ENCODE measurements at regions of chr17 and their contacts with region 1.

Region 1: DNA sequence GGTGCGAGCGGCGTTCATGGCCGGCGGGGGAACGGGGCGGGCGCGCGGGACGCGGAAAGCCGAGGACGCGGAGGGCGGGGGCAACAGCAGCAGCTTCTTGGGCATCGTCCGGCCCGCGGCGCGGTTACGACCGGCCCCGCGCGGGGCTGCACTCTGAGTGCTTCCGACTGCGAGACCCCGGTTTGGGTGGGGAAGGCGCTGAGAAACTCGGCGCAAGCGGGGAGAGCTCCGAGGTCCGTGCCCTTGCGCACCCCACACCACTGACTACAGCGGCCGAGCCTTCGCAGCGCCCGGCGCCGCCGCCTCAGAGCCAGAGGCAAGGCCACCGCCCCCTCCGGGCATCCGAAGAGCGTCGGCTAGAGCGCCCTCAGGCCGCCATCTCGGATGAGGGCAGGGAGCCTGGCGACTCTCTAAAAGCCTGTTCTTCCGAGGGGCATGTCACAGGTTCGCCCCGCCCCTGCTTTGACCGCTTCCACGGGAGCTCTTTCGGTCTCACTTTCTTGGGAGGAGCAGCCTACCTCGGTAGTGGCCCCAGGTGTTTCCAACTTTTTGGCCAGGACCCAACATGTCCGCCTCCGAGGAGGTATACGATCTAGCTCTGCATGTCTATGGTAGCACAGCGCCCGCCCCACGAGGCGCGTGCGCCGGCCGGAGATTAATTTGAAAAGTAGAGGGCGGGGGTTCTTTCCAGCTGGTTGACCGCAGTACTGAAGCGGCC is at the start of gene PRPSAP1:
- DNase-seq: no peak
- H3K4me3 ChIP-seq: peak within 1 kb of the TSS; percentile 90
- CTCF ChIP-seq: peak; percentile 64

Region 2: GRCh38 chr17:76337413-76337777 is 16.4 kb before region 1 on chr17:
- CTCF ChIA-PET with region 1: interaction called, 16 read pairs
- POLR2A ChIA-PET with region 1: no interaction called
- DNase-seq: no peak
- H3K4me3 ChIP-seq: no peak overlapping the region
- CTCF ChIP-seq: no peak

Region 3: GRCh38 chr17:76365256-76365903 is 11.6 kb after region 1 on chr17:
- CTCF ChIA-PET with region 1: interaction called, 67 read pairs
- POLR2A ChIA-PET with region 1: interaction called, 15 read pairs
- DNase-seq: no peak
- H3K4me3 ChIP-seq: no peak overlapping the region
- CTCF ChIP-seq: peak; percentile 6

Region 4: GRCh38 chr17:76370261-76370993 is 16.7 kb after region 1 on chr17:
- CTCF ChIA-PET with region 1: interaction called, 67 read pairs
- POLR2A ChIA-PET with region 1: interaction called, 15 read pairs
- DNase-seq: peak; percentile 67
- H3K4me3 ChIP-seq: no peak overlapping the region
- CTCF ChIP-seq: peak; percentile 68

Measured in AG04449 (cell line).